Activated naive CD4-positive, alpha-beta T cell treated with anti-CD3 and anti-CD28 coated beads for 36 hours (primary cell): ENCODE measurements at regions of chr12 and their contacts with region 1.

Region 1: GRCh38 chr12:55973598-55974307 is at the start of gene RAB5B:
- DNase-seq: peak; percentile 99
- H3K4me3 Mint-ChIP-seq: no peak within 1 kb of the TSS
- H3K27ac Mint-ChIP-seq: no peak within 1 kb of the TSS
- H3K4me1 Mint-ChIP-seq: peaks cover 24% of the 10 kb centered on the region
- H3K27me3 Mint-ChIP-seq: no peaks in the 10 kb centered on the region
- total RNA-seq, gene RAB5B: 33.2 to 35.7 TPM

Region 2: DNA sequence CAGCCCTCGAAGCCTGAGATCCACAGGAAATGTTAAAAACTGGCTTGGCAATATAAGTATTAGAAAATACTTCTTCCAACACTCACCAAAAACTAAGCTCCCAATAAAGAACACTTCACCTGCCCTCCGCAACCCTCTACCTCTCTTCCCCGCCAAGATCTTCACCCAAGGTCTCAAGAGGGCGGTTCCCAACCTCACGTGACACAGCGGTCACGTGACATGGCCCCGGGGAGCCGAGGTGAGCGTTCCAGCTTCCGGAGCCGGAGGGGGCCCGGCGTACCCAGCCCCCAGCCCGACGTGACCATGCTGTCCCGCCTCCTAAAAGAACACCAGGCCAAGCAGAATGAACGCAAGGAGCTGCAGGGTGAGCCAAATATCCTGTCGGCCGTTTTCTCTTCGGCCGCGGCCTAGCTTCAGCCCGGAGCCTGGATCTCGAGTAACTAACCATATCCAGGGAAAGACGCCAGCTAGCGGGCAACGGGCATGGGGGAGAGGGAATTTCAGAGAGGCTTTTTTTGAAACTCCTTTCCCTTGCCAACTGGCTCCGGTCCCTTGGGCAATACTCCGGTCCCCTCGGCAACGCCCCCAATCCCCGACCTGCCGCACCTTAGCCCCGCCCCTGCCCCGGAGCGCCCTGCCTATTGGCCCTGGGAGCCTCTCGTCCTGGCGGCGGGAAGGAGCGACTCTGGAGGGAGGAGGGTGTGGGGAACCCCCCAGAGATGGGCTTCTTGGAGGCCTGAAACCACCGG is 257.7 kb before region 1 on chr12 and contains the start of gene BLOC1S1:
- CTCF ChIA-PET with region 1: no interaction called
- intact Hi-C with region 1: loop called (anchors 1 kb)
- DNase-seq: peak; percentile 96
- H3K4me3 Mint-ChIP-seq: peak within 1 kb of the TSS; percentile 92
- H3K27ac Mint-ChIP-seq: peak within 1 kb of the TSS; percentile 91
- H3K4me1 Mint-ChIP-seq: peaks cover 28% of the 10 kb centered on the region
- H3K27me3 Mint-ChIP-seq: peaks cover 3% of the 10 kb centered on the region
- total RNA-seq, gene BLOC1S1: 118 to 124 TPM

Region 3: DNA sequence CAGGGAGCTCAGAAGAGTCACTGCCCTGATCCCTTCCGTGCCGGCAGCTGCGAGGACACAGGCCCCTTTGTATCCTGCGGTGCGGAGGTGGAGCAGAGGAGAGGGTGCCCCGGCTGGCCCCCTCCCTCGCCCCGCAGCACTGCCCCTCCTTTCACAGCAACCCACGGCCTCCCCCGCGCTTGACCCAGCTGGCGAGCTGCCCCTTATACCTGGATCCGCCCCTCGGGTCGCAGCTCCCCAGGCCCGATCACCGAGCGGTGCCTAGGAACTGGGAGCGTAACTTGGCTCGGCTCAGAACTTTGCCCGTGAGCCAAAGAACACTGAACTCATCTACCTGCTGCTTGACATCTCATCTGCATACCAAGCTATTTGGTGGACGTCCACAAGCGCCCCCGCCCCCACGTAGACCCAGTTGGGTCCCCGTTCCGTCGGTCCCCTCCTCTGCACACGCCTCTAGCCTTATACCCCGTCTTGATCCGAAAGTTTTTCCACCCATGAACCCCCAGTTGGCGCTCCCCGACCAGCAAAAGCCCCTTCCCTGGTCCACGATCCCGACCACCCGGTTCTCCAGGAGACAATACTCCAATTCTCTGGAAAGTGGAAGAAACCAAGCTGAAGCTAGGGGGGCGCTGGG is 143.7 kb before region 1 on chr12:
- CTCF ChIA-PET with region 1: no interaction called
- intact Hi-C with region 1: loop called (anchors 1 kb)
- DNase-seq: peak; percentile 24
- H3K4me3 Mint-ChIP-seq: peak overlapping the region; percentile 96
- H3K27ac Mint-ChIP-seq: peak overlapping the region; percentile 87
- H3K4me1 Mint-ChIP-seq: peaks cover 52% of the 10 kb centered on the region
- H3K27me3 Mint-ChIP-seq: no peaks in the 10 kb centered on the region

Region 4: GRCh38 chr12:55946553-55946952 is 27.2 kb before region 1 on chr12:
- CTCF ChIA-PET with region 1: interaction called, 3 read pairs
- intact Hi-C with region 1: loop called (anchors 1 kb)
- DNase-seq: no peak
- H3K4me3 Mint-ChIP-seq: no peak overlapping the region
- H3K27ac Mint-ChIP-seq: peak overlapping the region; percentile 65
- H3K4me1 Mint-ChIP-seq: peaks cover 39% of the 10 kb centered on the region
- H3K27me3 Mint-ChIP-seq: no peaks in the 10 kb centered on the region

Region 5: DNA sequence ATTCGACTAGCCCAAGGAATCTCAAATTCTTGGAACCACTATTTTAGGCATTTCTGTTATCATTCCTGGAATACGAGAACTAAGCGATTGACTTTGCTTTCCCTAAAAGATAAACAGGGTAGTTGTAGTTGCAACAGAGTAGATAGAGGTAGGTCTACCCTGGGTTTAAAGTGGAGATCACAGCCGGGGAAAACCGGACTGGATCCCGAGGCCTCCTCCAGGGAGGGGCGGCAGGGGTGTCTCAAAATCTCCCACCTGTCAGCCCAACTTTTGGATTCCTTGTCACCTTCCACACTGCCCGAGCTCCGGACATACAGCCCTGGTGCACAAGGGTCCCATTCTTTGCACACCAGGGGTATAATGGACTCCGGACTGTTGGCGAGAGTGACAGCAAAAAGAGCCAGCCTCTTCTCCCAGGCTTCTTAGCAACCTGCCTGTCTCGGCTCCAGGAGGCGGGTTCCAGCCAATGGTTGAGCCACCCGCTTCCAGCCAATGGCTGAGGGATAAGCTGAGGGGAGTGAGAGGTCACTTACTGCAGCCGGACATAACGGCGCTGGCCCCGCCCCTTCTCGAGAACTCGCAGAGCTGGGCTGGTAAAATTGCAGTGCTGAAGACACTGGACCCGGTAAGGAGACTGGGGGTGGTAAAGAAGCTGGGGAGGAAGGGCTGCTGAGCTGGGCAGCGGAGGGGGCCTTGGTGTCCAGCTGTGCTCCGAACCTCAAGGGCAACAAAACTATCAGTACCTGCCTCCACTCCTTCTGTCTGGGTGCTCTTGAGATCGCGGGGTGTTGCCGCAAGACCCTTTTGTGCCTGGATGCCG is 23.2 kb after region 1 on chr12 and contains the start of gene SUOX:
- CTCF ChIA-PET with region 1: interaction called, 9 read pairs
- intact Hi-C with region 1: loop called (anchors 1 kb)
- DNase-seq: peak; percentile 72
- H3K4me3 Mint-ChIP-seq: peak within 1 kb of the TSS; percentile 72
- H3K27ac Mint-ChIP-seq: peak within 1 kb of the TSS; percentile 36
- H3K4me1 Mint-ChIP-seq: peaks cover 20% of the 10 kb centered on the region
- H3K27me3 Mint-ChIP-seq: peaks cover 18% of the 10 kb centered on the region
- total RNA-seq, gene SUOX: 1.7 to 2.2 TPM

Region 6: GRCh38 chr12:56020423-56021184 is 46.9 kb after region 1 on chr12 and contains the start of gene IKZF4:
- CTCF ChIA-PET with region 1: no interaction called
- intact Hi-C with region 1: no loop called
- DNase-seq: peak; percentile 44
- H3K4me3 Mint-ChIP-seq: peak within 1 kb of the TSS; percentile 84
- H3K27ac Mint-ChIP-seq: peak within 1 kb of the TSS; percentile 80
- H3K4me1 Mint-ChIP-seq: peaks cover 30% of the 10 kb centered on the region
- H3K27me3 Mint-ChIP-seq: no peaks in the 10 kb centered on the region
- total RNA-seq, gene IKZF4: 7.5 to 8.2 TPM

Region 7: DNA sequence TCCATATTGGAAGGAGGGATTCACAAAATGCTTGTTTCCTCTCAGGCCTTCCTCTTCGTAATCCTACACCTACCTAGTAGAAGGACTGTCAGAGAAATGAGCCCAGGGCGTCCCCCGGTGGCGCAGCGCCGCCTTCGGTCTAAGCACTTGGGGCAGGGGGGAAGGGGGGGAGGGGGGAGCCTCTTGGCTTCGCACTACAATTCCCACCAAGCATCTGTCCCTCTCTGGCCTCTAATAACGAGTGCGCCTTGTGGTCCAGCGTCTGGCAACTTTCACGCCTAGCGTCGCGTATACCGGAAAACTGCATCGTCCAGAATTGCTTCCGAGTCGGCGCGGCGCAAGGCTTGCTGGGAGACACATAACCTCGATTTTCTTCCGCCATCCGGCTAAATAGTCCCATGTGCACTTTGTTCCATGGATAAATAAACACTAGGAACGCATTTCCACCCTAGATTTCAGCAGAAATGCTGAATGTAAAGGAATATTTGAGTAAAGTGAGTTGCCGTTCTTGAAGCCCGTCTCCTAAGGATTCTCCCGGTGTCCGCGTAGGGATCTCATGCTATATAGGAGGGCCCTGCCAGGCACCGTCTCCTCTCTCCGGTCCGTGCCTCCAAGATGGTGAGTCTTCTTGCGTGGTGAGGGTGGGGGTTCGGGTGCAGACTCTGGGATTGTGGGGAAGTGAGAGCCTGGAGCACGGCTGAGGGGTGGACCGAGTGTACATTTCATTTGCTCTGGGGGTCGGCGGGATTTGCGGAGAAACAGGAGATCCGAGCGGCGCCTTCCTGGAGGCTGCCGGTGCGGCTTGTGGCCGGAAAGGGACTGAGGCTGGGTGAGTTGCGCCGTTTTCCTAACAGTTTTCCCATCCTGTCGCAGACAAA is 68.0 kb after region 1 on chr12 and contains the start of gene RPS26:
- CTCF ChIA-PET with region 1: interaction called, 8 read pairs
- intact Hi-C with region 1: loop called (anchors 1 kb)
- DNase-seq: peak; percentile 96
- H3K4me3 Mint-ChIP-seq: peak within 1 kb of the TSS; percentile 96
- H3K27ac Mint-ChIP-seq: peak within 1 kb of the TSS; percentile 98
- H3K4me1 Mint-ChIP-seq: peaks cover 57% of the 10 kb centered on the region
- H3K27me3 Mint-ChIP-seq: no peaks in the 10 kb centered on the region
- total RNA-seq, gene RPS26: 31.0 to 37.3 TPM

Region 8: DNA sequence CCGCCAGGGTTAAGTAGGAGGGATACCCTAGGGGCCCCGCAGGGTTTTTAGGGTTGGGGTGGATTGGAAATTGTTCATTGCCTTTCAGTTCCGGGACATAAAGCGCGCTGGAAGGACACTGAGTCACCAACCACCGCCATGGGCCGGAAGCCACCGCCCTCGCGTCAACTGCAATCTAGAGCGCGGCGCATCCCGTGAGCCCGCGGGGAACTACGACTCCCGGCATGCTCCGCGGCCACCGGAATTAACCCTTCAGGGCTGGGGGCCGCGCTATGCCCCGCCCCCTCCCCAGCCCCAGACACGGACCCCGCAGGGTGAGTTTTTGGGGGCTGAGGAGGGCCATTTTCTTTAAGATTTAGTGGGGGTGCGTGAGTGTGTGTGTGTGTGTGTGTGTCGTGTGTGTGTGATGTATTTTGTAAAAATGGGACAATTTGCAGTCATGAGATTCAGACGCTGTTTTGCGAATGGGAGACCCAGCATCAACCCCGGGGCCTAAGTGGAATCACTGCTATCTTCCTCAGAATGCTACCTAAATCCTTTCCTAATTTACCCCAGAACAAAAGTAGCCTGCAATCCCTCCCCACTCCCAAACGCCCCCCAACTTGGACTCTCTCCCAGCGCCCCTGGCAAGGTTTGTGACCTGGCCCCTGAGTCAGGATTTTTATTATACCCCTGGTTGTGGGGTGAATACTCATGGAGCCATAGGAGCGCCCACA is 178.7 kb after region 1 on chr12 and contains the start of gene MYL6B:
- CTCF ChIA-PET with region 1: no interaction called
- intact Hi-C with region 1: loop called (anchors 1 kb)
- DNase-seq: peak; percentile 98
- H3K4me3 Mint-ChIP-seq: peak within 1 kb of the TSS; percentile 84
- H3K27ac Mint-ChIP-seq: peak within 1 kb of the TSS; percentile 98
- H3K4me1 Mint-ChIP-seq: peaks cover 37% of the 10 kb centered on the region
- H3K27me3 Mint-ChIP-seq: no peaks in the 10 kb centered on the region
- total RNA-seq, gene MYL6B: 49.2 to 57.5 TPM